GM12878 (cell line): ENCODE measurements at regions of chr22 and their contacts with region 1.

Region 1: GRCh38 chr22:22130953-22131608 is 113.5 kb upstream of the VPREB1 start:
- DNase-seq: no peak
- ATAC-seq: peak; percentile 50
- H3K4me3 ChIP-seq: no peak overlapping the region
- H3K27ac ChIP-seq: no peak overlapping the region
- H3K4me1 ChIP-seq: no peaks in the 10 kb centered on the region
- H3K27me3 ChIP-seq: no peaks in the 10 kb centered on the region
- CTCF ChIP-seq: no peak
- EP300 ChIP-seq: no peak
- POLR2A ChIP-seq: no peak
- RAD21 ChIP-seq: no peak

Region 2: DNA sequence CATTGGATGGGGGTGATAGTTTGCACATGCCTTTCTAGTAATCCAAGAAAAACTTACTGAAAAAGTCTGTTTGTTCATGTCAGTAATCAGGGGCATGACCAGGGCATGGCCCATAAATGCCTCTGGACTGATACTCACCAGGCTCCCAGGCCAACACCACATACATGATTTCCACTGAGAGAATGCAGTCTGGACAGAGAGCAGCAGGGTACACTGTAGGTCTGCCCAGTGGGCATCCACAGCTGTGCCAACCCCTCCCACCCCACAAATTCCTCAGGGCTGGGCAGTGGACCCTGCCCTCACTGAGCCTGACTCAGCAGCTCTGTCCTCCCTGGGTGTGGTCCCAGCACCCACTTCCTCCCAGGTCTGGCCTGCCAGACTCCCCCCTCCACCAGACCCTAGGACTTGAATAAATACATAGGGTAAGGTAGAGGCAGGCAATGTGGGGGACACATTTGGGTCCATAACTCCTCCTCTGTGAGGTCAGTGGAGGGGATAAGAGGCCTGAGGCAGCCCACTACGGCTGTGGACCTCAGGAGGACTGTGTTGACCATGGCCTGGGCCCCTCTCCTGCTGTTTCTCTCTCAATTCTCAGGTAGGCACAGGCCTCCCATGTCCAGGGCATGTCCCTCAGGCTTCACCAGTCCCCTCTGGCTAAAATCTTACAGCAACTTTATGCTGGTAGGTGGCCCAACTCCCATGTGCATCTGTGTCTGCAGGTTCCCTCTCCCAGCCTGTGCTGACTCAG is 56.3 kb before region 1 on chr22:
- CTCF ChIA-PET with region 1: no interaction called
- POLR2A ChIA-PET with region 1: interaction called, 4 read pairs
- RAD21 ChIA-PET with region 1: interaction called, 3 read pairs
- SMC1A ChIA-PET with region 1: no interaction called
- in situ Hi-C with region 1: loop called (anchors 5 kb)
- intact Hi-C with region 1: loop called (anchors 10 kb)
- DNase-seq: no peak
- ATAC-seq: no peak
- H3K4me3 ChIP-seq: no peak overlapping the region
- H3K27ac ChIP-seq: no peak overlapping the region
- H3K4me1 ChIP-seq: peaks cover 11% of the 10 kb centered on the region
- H3K27me3 ChIP-seq: no peaks in the 10 kb centered on the region
- CTCF ChIP-seq: no peak
- EP300 ChIP-seq: no peak
- POLR2A ChIP-seq: no peak
- RAD21 ChIP-seq: no peak

Region 3: DNA sequence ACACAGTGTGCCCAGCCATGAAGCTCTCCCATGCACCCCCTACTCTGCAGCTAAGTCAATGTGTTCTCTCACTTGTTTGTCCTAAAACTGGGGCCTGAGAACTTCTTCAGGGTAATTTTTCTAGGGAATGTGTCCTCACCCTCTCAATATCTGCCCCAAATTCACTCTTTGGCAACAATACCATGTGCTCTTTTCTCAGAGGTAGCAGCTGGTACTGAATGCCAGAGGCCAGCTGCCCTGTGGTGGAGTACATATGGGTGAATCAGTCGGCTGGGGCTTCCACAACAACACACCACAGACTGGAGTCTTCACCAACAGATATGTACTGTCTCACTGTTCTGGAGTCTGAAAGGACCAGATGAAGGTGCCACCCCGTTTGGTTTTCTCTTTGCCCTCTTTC is 50.8 kb before region 1 on chr22:
- CTCF ChIA-PET with region 1: interaction called, 3 read pairs
- POLR2A ChIA-PET with region 1: interaction called, 3 read pairs
- RAD21 ChIA-PET with region 1: no interaction called
- SMC1A ChIA-PET with region 1: interaction called, 3 read pairs
- in situ Hi-C with region 1: loop called (anchors 5 kb)
- intact Hi-C with region 1: loop called (anchors 10 kb)
- DNase-seq: no peak
- ATAC-seq: no peak
- H3K4me3 ChIP-seq: no peak overlapping the region
- H3K27ac ChIP-seq: no peak overlapping the region
- H3K4me1 ChIP-seq: no peaks in the 10 kb centered on the region
- H3K27me3 ChIP-seq: no peaks in the 10 kb centered on the region
- CTCF ChIP-seq: no peak
- EP300 ChIP-seq: no peak
- POLR2A ChIP-seq: no peak
- RAD21 ChIP-seq: no peak

Region 4: DNA sequence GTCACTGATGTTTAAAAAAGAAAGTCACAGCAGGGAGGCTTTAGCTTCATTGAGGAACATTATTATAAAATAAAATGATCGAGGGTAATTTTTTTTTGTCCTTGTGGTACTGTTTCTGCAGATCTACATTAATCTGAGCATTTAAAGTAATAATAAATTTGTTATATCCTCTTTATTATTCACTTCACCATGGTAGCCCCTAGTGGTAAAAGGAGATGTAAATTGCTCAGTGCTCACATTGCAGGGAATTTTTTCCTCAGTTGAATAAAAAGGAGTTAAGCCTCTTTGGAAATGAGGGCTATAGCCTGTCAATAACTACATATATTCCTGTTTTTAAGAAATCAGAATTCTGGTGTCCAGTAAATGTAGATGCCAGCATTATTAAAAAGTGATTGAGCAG is 13.8 kb after region 1 on chr22:
- CTCF ChIA-PET with region 1: interaction called, 7 read pairs
- POLR2A ChIA-PET with region 1: no interaction called
- RAD21 ChIA-PET with region 1: no interaction called
- SMC1A ChIA-PET with region 1: interaction called, 37 read pairs
- in situ Hi-C with region 1: no loop called
- intact Hi-C with region 1: no loop called
- DNase-seq: no peak
- ATAC-seq: no peak
- H3K4me3 ChIP-seq: no peak overlapping the region
- H3K27ac ChIP-seq: no peak overlapping the region
- H3K4me1 ChIP-seq: no peaks in the 10 kb centered on the region
- H3K27me3 ChIP-seq: no peaks in the 10 kb centered on the region
- CTCF ChIP-seq: peak in 1 of 3 experiments; percentile 12; a peak in 1 of 6 replicates
- EP300 ChIP-seq: no peak
- POLR2A ChIP-seq: no peak
- RAD21 ChIP-seq: no peak